Right ventricle myocardium superior (tissue), 1 donor: ENCODE measurements at regions of chr5 and their contacts with region 1.

Region 1: GRCh38 chr5:164487939-164488338 is 982.5 kb downstream of the MAT2B start:
- DNase-seq: no peak
- ATAC-seq: no peak

Region 2: DNA sequence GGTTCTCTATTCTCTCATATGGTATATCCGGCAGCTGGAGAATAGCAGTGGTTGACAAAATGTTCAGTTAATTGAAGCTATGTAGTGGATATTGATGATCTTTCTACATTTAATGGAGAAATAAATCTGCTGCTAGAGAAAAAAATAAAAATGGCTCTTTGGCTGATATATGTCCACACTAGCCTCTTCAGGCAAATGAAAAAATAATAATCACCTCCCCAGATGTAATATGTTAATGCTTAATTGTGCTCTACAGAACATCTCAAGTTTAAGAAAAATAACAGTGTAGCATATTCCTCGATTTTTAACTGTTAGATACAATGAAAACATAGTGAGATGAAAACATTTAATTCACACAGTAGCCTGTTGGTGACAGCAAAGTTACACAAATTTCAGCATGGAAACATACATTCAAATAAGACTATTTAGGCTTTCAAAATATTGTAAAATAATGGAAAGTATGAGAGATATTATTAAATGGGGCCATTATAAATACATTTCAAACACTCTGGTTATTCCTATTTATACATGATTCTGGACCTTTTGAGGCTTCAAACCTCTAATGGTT is 439.5 kb before region 1 on chr5:
- intact Hi-C with region 1: loop called (anchors 10 kb)
- DNase-seq: no peak
- ATAC-seq: no peak